SK-N-SH (cell line): ENCODE measurements at regions of chr3 and their contacts with region 1.

Region 1: GRCh38 chr3:58640700-58641372 is 25.7 kb downstream of the FAM3D start:
- DNase-seq: peak; percentile 90
- H3K4me3 ChIP-seq: peak overlapping the region in 1 of 2 experiments; percentile 11; a peak in 1 of 4 replicates
- H3K27ac ChIP-seq: no peak overlapping the region
- H3K4me1 ChIP-seq: peaks cover 0 to 5% of the 10 kb centered on the region in 2 experiments; a peak in 1 of 4 replicates
- H3K27me3 ChIP-seq: no peaks in the 10 kb centered on the region
- CTCF ChIP-seq: peak; percentile 88
- EP300 ChIP-seq: no peak
- RAD21 ChIP-seq: peak; percentile 96

Region 2: GRCh38 chr3:58355179-58355578 is 285.7 kb before region 1 on chr3:
- CTCF ChIA-PET with region 1: no interaction called
- POLR2A ChIA-PET with region 1: no interaction called
- DNase-seq: no peak
- H3K4me3 ChIP-seq: no peak overlapping the region
- H3K27ac ChIP-seq: no peak overlapping the region
- H3K4me1 ChIP-seq: peaks cover 0 to 7% of the 10 kb centered on the region in 2 experiments; a peak in 1 of 4 replicates
- H3K27me3 ChIP-seq: no peaks in the 10 kb centered on the region
- CTCF ChIP-seq: no peak
- EP300 ChIP-seq: no peak
- RAD21 ChIP-seq: no peak

Region 3: DNA sequence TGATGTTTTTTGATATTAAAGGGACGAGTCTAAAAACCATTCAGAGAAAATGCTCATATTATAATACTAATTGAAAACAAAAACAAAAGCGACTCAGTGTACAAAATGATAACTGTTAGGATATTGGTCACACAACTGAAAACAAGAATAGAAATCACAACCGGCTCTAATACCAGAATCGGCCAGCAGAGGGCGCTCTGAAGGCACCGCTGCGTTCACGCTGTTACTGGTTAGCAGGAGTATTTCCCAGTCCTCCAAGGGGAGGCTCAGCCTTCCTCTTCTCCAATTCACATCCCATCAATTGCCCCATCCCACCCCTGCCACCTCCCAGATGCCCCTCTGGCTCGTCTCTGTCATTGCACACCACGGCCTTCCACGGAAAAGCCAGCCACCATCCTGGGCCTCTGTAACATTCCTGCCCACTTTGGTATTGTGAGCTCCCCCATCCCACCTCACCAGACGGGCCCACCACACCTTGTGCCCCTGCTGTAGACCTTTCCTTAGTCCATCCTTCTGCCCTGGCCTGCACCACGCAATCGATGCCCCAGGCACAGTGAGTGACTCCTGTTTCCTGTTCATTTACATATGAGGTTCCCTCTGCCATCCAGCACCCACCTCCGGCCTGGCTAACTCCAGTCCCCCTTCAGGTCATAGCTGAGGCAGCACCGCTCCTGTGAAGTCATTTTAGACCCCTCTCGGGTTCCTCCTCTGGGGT is 72.1 kb before region 1 on chr3:
- CTCF ChIA-PET with region 1: interaction called, 446 read pairs
- POLR2A ChIA-PET with region 1: no interaction called
- DNase-seq: peak; percentile 72
- H3K4me3 ChIP-seq: no peak overlapping the region; a peak in 1 of 4 replicates
- H3K27ac ChIP-seq: no peak overlapping the region
- H3K4me1 ChIP-seq: peaks cover 4 to 13% of the 10 kb centered on the region in 2 experiments; a peak in 1 of 4 replicates
- H3K27me3 ChIP-seq: no peaks in the 10 kb centered on the region
- CTCF ChIP-seq: peak; percentile 94
- EP300 ChIP-seq: no peak
- RAD21 ChIP-seq: peak; percentile 84

Region 4: DNA sequence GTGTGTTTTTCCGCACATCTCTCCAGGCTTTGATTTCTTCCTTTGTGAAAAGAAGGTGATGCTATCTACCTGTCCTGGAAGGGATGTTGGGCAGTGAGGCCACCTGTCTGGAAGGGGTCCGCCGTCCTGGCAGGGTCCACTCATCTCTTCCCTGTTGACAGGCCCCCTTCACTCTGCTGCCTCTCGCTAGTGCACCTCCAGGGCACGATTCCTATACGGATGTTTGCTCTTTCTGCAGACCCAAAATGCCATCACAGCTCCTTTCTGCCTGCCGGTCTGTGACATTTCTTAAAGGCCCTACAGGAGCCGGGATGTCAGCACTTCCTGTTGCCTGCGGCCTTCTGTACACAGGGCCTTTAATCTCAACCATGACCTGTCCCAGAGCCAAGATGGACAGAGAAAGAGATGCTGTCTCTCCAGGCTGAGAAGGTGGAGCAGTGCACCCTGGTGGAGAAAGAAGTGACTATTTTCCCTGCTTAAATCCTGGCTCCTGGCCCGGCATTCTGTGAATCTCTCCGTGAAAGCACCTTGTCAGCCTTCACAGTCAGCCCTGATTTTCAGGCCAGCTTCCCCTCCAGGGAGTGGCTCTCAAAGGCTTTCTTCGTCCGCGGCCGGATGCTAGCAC is 18.3 kb after region 1 on chr3:
- CTCF ChIA-PET with region 1: interaction called, 12 read pairs
- POLR2A ChIA-PET with region 1: no interaction called
- DNase-seq: peak; percentile 36
- H3K4me3 ChIP-seq: no peak overlapping the region
- H3K27ac ChIP-seq: no peak overlapping the region
- H3K4me1 ChIP-seq: no peaks in the 10 kb centered on the region
- H3K27me3 ChIP-seq: peaks cover 17% of the 10 kb centered on the region; the same call in 1 of the 2 replicates
- CTCF ChIP-seq: peak; percentile 44
- EP300 ChIP-seq: no peak
- RAD21 ChIP-seq: 0 out of 2 replicates have a peak, but pooled peaks have one; percentile 12

Region 5: GRCh38 chr3:58665410-58665809 is 24.6 kb after region 1 on chr3:
- CTCF ChIA-PET with region 1: interaction called, 12 read pairs
- POLR2A ChIA-PET with region 1: no interaction called
- DNase-seq: no peak
- H3K4me3 ChIP-seq: no peak overlapping the region; a peak in 1 of 4 replicates
- H3K27ac ChIP-seq: no peak overlapping the region
- H3K4me1 ChIP-seq: no peaks in the 10 kb centered on the region
- H3K27me3 ChIP-seq: no peaks in the 10 kb centered on the region; the same call in 1 of the 2 replicates
- CTCF ChIP-seq: no peak
- EP300 ChIP-seq: no peak
- RAD21 ChIP-seq: no peak

Region 6: DNA sequence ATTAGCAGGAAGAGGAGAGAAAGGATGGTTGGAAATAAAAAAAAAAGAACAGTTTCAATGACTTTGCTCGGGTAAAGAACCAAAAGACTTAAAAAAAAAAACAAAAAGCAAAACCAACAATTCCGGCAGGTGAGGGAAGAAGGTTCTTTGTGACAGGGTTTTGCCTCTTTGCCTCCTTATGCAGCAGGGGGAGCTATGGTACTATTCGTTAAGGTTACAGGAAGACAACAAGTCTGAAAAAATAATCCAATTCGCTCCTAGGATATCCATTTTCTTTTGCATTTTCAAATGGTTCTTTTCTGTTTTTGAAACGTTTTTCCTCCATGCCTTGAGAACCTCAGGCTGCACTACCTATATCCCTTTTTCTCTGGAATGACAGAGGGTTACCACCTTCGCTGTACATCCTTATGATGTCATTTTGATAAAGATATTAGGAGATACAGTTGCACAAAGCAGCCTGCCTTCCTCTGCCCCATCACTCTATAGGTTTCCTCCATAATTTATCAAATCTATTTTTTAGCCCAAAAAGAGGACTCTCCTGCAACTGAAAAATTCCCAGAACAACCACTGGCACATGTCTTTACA is 354.0 kb after region 1 on chr3:
- CTCF ChIA-PET with region 1: interaction called, 14 read pairs
- POLR2A ChIA-PET with region 1: no interaction called
- DNase-seq: peak; percentile 52
- H3K4me3 ChIP-seq: 0 out of 4 replicates have a peak overlapping the region, but pooled peaks of 1 of the 2 experiments have one; percentile 9
- H3K27ac ChIP-seq: 0 out of 4 replicates have a peak overlapping the region, but pooled peaks of 1 of the 2 experiments have one; percentile 30
- H3K4me1 ChIP-seq: peaks cover 2 to 26% of the 10 kb centered on the region in 2 experiments
- H3K27me3 ChIP-seq: no peaks in the 10 kb centered on the region
- CTCF ChIP-seq: peak; percentile 87
- EP300 ChIP-seq: no peak
- RAD21 ChIP-seq: peak; percentile 89

Region 7: DNA sequence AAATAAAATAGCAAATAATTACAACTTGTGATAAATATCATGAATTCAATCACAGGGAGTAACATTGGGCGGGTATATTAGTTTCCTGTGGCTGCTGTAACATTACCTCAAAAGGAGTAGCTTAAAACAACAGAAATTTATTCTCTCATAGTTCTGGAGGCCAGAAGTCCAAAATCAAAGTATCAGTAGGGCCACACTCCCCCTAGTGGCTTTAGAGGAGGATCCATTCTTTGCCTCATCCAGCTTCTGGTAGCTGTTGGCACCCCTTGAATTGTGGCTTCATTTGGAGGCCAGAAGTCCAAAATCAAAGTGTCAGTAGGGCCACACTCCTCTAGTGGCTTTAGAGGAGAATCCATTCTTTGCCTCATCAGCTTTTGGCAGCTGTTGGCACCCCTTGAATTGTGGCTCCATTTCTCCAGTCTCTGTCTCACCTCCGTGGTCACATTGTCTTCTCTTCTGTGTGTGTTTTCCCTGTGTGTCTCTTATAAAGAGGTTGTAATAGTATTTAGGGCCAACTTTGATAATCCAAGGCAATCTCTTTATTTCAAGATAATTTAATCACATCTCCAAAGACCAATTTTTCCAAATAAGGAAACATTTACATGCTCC is 412.1 kb after region 1 on chr3:
- CTCF ChIA-PET with region 1: interaction called, 12 read pairs
- POLR2A ChIA-PET with region 1: no interaction called
- DNase-seq: peak; percentile 27
- H3K4me3 ChIP-seq: no peak overlapping the region
- H3K27ac ChIP-seq: no peak overlapping the region
- H3K4me1 ChIP-seq: peaks cover 0 to 12% of the 10 kb centered on the region in 2 experiments; a peak in 1 of 4 replicates
- H3K27me3 ChIP-seq: no peaks in the 10 kb centered on the region
- CTCF ChIP-seq: peak; percentile 66
- EP300 ChIP-seq: no peak
- RAD21 ChIP-seq: peak; percentile 61